MCF 10A (cell line): ENCODE measurements at regions of chr2 and their contacts with region 1.

Region 1: GRCh38 chr2:61764035-61764800 is 89.6 kb downstream of the FAM161A start:
- DNase-seq: peak; percentile 98
- H3K4me3 Mint-ChIP-seq: peak overlapping the region; percentile 95
- H3K27ac Mint-ChIP-seq: peak overlapping the region; percentile 100
- H3K4me1 Mint-ChIP-seq: peaks cover 16% of the 10 kb centered on the region
- H3K27me3 Mint-ChIP-seq: no peaks in the 10 kb centered on the region
- CTCF ChIP-seq: no peak

Region 2: DNA sequence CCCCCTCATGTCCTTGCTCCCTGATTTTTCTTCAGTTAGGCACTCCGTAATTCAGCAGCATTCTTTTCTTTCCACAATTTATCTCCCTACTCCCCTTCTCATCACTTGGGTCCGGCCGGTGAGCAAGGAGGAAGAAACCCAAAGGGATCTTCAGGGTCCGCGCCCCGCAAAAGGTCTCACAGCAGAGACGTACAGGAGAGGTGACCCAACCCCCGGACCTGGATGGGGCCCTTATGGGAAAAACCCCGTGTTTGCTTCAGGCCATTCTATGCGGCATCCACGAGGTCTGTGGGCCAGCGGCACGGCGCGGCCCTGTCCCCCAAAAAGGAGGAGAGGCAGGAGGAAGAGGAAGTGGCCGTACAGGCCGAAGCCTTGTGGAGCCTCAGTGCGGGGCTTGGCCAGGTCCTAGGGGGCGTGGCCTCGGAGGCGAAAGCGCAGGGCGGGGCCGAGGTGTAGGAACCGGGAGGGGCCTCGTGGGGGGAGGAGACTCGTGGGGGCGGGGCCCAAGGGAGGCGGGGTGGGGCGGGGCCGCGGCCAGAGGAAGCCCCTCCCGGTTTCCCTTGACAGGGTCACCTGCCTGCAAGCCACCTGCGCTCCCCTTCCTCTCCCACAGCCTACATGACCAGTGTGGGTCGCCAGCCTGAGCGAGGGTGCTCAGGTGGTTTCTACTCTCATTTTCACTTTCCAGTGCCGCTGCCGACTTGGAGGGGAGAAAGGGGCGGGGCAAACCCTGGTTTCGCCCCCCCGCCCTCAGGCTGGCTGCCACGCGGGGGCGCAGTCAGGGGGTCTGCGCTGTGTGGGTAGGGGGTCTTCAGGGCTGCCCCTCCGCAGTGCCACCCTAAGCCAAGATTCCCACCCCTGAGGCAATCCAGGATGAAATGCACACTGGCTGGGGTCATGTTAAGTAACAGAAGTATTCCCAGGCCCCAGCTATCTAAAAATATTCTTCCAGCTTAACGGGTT is 69.6 kb before region 1 on chr2:
- CTCF ChIA-PET with region 1: no interaction called
- POLR2A ChIA-PET with region 1: no interaction called
- intact Hi-C with region 1: loop called (anchors 1 kb)
- DNase-seq: peak; percentile 91
- H3K4me3 Mint-ChIP-seq: peak overlapping the region; percentile 74
- H3K27ac Mint-ChIP-seq: peak overlapping the region; percentile 66
- H3K4me1 Mint-ChIP-seq: no peaks in the 10 kb centered on the region
- H3K27me3 Mint-ChIP-seq: no peaks in the 10 kb centered on the region
- CTCF ChIP-seq: peak; percentile 6

Region 3: DNA sequence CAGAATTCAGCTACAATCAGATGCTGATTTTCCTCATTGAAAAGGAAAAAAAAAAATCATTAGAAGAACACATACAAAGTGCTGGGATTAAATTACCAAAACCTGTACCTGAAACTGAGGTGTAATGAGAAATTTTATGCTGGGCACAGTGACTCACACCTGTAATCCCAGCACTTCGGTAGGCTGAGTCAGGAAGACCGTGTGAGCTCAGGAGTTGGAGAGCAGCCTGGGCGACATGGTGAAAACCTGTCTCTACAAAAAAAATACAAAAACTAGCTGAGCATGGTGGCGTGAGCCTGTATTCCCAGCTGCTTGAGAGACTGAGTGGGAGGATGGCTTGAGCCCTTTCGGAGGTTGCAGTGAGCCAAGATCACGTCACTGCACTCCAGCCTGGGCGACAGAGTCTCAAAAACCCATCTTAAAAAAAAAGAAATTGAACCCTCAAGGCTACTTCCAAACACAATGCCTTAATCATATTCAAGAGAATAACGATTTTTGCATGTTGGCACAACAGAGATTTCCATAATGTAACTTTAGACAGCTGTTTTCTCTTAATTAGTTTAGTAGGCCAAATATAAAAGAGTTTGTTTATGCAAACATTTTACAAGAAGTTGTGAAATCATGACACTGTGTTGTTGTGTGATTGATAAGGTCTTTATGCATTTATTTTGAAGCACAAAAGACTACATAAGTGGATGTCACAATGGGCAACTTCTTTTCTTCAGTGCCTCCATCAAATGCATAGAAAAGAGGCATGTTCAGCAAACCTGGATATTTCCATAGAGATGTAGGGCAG is 25.8 kb after region 1 on chr2:
- CTCF ChIA-PET with region 1: no interaction called
- POLR2A ChIA-PET with region 1: interaction called, 12 read pairs
- intact Hi-C with region 1: no loop called
- DNase-seq: peak; percentile 51
- H3K4me3 Mint-ChIP-seq: no peak overlapping the region
- H3K27ac Mint-ChIP-seq: no peak overlapping the region
- H3K4me1 Mint-ChIP-seq: peaks cover 1% of the 10 kb centered on the region
- H3K27me3 Mint-ChIP-seq: no peaks in the 10 kb centered on the region
- CTCF ChIP-seq: no peak

Region 4: DNA sequence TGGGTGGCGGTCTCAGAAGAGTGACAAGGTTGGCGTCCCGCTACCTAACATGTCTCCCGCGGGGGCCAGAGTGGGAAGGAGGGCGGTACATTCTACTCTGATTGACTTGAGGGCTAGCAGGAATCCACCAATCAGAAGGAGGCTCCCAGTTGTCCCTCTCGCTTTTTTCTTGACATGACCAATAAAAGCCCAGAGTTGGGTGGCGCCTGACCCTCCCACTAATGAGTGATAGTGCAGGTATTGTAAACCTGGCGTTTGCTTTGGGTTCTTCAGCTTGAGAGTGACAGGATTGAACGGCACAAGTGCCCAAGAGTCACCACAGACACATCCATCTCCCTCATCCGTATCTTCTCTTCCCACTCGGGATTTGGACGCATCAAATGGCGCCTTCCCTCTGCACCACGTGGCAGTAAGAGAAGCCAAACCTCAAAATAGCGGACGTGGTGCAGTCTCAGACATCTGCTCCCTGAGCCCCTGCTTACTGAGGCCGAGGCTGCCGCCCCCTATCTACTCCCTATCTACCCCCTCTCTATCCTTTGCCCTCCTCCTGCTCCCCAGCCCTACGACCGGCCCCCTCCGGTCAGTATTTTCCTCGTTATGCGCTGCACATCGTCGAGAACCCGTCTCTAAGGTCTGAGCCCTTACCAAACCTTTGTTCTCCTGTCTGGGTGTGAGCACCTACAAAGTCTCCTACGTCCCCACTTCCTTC is 90.4 kb after region 1 on chr2:
- CTCF ChIA-PET with region 1: interaction called, 7 read pairs
- POLR2A ChIA-PET with region 1: interaction called, 28 read pairs
- intact Hi-C with region 1: loop called (anchors 5 kb)
- DNase-seq: peak; percentile 98
- H3K4me3 Mint-ChIP-seq: peak overlapping the region; percentile 93
- H3K27ac Mint-ChIP-seq: peak overlapping the region; percentile 81
- H3K4me1 Mint-ChIP-seq: peaks cover 6% of the 10 kb centered on the region
- H3K27me3 Mint-ChIP-seq: no peaks in the 10 kb centered on the region
- CTCF ChIP-seq: no peak